Activated CD4-positive, alpha-beta memory T cell treated with anti-CD3 and anti-CD28 coated beads, Interleukin-2, amount 10 ng/mL, durations not matched to agents 7 days and 5 days (primary cell): ENCODE measurements at regions of chr12 and their contacts with region 1.

Region 1: GRCh38 chr12:127381048-127381668 is 885.8 kb upstream of the TMEM132C start:
- DNase-seq: peak; percentile 56
- H3K4me3 Mint-ChIP-seq: no peak overlapping the region
- H3K27ac Mint-ChIP-seq: no peak overlapping the region
- H3K4me1 Mint-ChIP-seq: peaks cover 4% of the 10 kb centered on the region
- H3K27me3 Mint-ChIP-seq: peaks cover 2% of the 10 kb centered on the region

Region 2: DNA sequence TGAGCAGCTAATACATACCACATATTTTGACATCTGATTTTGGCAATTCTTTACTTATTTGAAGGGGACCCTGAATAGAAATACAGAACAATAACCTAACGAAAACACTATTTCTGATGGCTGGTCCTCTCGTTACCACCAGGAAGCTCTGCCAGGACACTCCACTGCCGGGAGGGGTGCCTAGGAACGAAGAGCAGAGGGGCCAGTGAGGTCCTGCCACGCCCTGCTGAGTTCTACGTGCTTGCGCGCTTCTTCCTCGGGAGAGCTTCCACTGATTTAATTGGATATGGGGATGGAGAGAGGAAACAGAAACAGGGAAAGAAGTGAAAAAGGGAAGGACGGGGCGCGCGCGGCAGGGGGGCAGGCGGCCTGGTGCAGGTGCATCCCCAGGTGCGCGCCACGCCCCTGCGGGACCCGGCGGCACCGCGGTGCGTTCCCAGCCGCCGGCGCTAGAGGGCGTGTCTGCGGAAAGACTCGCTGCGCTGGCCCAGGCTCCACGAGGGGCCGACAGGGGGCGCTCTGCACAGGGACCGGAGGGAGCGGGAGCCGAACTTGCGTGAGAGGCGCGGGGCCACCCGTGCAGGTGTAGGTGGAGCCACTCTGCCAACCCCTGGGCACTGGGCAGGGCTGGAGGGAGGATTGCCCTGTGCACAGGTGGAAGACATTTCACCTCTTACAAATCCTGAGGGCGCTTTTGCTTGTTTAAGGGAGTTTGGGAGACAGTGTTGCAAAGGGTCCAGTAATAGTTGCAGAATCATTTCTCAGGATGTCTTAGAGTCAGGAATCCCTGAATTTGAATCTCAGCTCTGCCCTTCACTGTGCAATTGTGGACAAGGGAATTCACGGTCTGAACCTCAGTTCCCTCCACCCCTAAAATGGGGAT is 100.5 kb before region 1 on chr12:
- CTCF ChIA-PET with region 1: interaction called, 14 read pairs
- POLR2A ChIA-PET with region 1: no interaction called
- DNase-seq: peak; percentile 77
- H3K4me3 Mint-ChIP-seq: no peak overlapping the region
- H3K27ac Mint-ChIP-seq: no peak overlapping the region
- H3K4me1 Mint-ChIP-seq: peaks cover 20% of the 10 kb centered on the region
- H3K27me3 Mint-ChIP-seq: no peaks in the 10 kb centered on the region

Region 3: DNA sequence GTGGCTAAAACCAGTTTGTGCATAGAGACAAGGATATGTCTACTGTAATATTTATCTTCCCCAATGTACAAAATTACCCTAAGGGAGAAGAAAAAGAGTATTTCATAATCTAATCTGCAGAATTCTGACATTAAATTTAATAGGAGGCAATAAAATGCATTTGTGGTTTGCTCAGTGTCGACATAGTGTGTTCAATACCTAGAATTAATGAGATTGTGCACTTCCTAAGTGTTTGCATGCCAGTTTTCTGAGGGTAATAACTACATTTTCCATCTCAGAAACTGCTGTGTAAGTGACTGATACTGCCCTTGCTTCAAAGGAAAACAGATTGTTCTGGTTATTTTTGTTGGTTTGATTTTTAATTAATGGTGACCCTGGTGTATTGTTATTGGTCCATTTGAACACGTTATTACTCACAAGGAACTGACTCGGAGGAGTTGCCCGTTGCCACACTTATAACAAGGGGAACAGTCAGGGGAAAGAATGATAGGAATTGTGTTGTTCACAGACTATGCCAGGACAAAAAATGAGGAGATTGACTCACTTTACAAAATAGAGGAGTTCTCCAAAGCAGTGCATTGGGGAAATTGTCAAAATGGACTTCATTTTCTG is 74.4 kb before region 1 on chr12:
- CTCF ChIA-PET with region 1: no interaction called
- POLR2A ChIA-PET with region 1: no interaction called
- DNase-seq: no peak
- H3K4me3 Mint-ChIP-seq: no peak overlapping the region
- H3K27ac Mint-ChIP-seq: no peak overlapping the region
- H3K4me1 Mint-ChIP-seq: peaks cover 5% of the 10 kb centered on the region
- H3K27me3 Mint-ChIP-seq: no peaks in the 10 kb centered on the region

Region 4: GRCh38 chr12:127355061-127355841 is 25.9 kb before region 1 on chr12:
- CTCF ChIA-PET with region 1: no interaction called
- POLR2A ChIA-PET with region 1: no interaction called
- DNase-seq: no peak
- H3K4me3 Mint-ChIP-seq: no peak overlapping the region
- H3K27ac Mint-ChIP-seq: no peak overlapping the region
- H3K4me1 Mint-ChIP-seq: no peaks in the 10 kb centered on the region
- H3K27me3 Mint-ChIP-seq: no peaks in the 10 kb centered on the region

Region 5: DNA sequence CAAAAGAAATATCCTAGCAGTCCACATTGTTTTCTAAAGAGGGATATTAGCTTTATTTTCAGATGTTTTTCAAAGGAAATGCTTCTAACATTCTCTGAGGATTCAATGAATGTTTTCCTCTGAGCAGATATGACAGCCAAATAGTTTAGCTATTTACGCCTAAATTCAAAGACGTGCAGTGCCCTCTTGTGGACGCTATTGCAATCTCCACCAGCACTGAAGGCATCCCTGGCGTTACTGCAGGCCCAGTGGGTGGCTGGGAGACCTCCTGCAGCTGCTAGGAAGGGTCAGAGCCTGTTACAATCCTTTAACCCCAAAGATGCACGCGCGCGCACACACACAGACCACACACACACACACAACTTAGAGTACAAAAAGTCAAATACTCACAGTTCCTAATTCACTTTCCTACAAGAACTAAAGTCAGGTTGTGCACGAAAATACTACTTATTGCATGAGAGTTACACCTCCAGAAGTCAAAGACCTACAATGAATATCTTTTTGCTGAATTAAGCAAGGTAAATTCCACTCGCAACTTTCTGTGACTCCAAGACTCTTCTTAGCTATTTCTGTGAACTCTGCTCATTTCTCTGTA is 296.5 kb after region 1 on chr12:
- CTCF ChIA-PET with region 1: interaction called, 15 read pairs
- POLR2A ChIA-PET with region 1: no interaction called
- DNase-seq: peak; percentile 61
- H3K4me3 Mint-ChIP-seq: no peak overlapping the region
- H3K27ac Mint-ChIP-seq: no peak overlapping the region
- H3K4me1 Mint-ChIP-seq: no peaks in the 10 kb centered on the region
- H3K27me3 Mint-ChIP-seq: no peaks in the 10 kb centered on the region